ENCODE measurements at regions of chr3 and their contacts with region 1.

Region 1: DNA sequence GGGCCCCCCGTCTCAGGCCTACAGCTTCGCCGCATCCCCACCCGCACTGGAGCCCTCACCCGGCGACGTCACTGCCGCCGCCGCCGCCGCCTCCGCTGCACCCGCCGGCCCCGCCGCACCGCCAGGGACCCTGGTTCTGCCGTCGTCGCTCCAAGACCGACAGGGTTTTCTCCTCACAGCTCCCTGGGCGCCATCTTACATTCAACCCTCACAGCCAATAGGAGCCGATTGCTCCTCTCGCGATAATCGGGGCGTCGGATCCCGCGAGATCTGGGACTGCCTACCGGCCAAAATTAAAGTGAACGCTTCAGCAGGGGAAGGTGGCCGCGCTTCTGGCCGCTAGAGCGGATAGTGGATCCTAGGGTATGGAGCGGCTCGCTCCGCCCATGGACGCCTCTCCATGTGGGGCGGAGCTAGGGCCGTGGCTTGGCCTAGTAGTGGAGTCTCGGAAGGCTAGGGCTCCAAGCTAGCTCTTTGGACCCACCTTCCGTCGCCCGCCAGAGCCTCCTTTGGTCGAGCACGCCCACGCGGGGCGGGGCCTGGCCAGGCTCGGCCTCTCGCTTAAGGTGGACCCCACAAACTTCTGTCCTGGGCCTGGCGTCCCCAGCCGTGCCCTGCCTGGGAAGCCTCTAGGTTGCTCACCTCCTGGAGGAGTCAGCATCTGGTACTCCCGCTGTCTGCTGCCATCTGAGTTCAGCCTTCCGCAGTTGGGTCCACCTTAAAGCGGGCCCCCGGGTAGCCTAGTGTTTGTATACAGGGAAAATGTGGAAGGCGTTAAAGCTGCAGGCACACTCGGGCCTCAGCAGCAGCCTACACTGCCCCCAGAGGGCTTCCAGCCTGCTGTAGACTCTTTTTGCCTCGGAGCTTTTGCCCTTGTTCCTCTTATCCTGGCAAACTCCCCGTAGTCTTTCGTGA is at the start of gene QRICH1:
- DNase-seq: peak; percentile 99
- H3K4me3 Mint-ChIP-seq: peak within 1 kb of the TSS; percentile 96
- H3K27ac Mint-ChIP-seq: peak within 1 kb of the TSS; percentile 97
- H3K4me1 Mint-ChIP-seq: peaks cover 17% of the 10 kb centered on the region
- H3K27me3 Mint-ChIP-seq: no peaks in the 10 kb centered on the region
- total RNA-seq, gene QRICH1: 138 and 152 TPM in 2 replicates

Region 2: DNA sequence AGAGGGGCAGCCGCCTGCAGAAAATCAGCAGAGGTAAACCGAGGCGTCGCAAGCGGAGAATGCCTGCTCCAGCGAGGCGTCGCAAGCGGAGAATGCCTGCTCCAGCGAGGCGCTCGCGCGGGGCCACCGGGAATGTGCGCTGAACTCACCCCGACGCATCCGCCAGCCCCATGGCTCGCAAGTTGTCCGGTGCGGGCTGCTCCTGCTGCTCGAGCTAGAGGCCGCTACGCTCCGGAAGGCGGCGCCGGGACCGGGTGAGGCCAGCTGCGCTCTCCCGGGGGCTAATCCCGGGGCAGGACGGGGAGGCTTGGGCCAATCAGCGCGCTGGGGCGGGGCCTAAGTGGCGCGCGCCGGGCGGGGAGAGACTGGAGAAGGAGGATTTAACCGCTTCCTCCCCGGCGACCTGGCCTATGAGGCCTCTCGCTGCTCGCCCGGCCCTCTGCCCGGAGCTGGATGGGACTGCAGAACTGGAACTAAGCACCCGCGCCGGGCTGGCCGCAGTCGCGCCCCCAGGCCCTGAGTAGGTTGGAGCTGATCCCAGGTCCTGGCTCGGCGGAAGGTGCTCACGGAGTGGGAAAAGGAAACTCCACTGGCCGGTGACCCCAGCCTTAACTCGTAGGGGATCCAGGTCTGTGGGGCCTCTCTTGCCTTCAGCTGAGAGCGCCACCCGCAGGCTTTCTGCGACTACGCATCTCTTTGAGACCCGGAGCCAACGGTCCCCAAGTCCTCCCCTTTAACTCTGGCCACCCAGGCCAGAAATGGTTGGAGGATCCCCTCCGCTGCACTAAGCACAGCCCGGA is 458.7 kb before region 1 on chr3 and contains the start of gene SLC26A6:
- intact Hi-C with region 1: loop called (anchors 1 kb)
- DNase-seq: peak; percentile 99
- H3K4me3 Mint-ChIP-seq: peak within 1 kb of the TSS; percentile 93
- H3K27ac Mint-ChIP-seq: peak within 1 kb of the TSS; percentile 91
- H3K4me1 Mint-ChIP-seq: peaks cover 19% of the 10 kb centered on the region
- H3K27me3 Mint-ChIP-seq: no peaks in the 10 kb centered on the region
- total RNA-seq, gene SLC26A6: 57.2 and 58.2 TPM in 2 replicates

Region 3: DNA sequence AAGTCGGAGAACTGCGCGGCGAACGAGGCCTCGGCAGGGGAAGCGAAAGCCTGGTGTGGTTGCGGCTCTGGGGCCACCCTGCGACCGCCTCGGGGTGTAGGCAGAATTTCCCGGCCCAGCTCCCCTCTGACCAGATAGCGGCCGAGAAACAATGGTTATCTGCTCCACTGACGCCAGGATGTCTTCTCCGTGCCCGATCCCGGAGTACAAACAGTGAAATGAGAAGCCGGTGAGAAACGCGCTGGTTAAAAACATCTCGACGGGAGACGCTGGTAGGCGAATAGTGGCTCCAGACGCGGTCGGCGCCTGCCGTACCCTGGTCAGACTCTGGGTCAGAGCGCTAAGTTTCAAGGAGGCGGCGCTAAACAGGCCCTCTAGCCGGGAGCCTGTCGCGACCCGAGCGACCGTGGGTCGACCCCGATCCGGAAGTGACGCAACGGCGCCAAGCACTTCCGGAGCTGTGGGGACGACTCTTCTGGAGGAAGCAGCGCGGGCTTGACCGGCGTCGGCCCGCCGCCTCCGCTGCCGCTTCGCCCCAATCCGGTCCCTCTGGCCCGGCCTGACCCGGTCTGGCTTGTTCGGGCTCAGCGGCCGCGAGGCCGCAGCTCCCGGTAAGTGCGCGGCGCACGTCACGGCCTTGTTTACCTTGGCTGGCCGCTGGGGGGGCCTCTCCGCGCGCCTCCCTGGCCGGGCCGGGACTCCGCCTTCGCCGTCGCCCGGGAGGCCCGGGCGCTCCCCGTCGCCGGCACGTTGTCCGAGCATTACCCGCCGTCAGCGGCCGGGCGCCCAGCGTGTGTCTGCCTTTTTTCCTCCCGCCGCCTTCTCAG is 175.5 kb before region 1 on chr3 and contains the start of gene ARIH2:
- intact Hi-C with region 1: loop called (anchors 2 kb)
- DNase-seq: peak; percentile 97
- H3K4me3 Mint-ChIP-seq: peak within 1 kb of the TSS; percentile 91
- H3K27ac Mint-ChIP-seq: peak within 1 kb of the TSS; percentile 97
- H3K4me1 Mint-ChIP-seq: peaks cover 22% of the 10 kb centered on the region
- H3K27me3 Mint-ChIP-seq: no peaks in the 10 kb centered on the region
- total RNA-seq, gene ARIH2: 157 TPM in 2 replicates

Region 4: DNA sequence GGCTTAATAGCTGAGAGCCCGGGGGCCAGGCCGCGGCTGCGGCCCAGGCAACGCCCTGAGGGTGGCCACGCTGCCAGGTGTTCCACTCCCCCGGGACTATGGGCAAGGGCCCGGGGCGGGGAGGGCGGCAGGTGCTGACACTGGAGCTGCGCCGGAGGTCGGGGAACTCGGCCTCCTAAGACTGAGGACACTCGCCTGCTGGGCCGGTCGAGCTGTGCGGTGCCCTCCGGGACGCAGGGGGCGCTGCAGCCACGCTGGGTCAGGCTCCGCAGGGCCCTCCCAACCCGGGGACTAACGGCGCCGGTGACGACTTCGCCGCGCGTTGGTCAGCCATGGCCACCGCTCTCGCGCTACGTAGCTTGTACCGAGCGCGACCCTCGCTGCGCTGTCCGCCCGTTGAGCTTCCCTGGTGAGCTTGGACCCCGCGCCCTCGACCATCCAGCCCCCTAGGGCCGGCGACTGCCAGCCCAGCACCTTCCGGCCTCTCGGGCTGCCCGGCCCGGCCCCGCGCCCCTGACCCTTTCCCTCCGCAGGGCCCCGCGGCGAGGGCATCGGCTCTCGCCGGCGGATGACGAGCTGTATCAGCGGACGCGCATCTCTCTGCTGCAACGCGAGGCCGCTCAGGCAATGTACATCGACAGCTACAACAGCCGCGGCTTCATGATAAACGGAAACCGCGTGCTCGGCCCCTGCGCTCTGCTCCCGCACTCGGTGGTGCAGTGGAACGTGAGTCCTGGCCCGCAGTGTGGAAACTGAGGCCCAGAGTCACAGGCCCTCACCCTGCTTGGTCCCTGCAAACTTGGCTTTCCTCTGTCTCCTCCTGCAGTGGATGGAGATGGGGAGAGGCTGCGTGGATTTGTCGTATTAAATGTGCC is 72.1 kb before region 1 on chr3 and contains the start of gene NDUFAF3:
- intact Hi-C with region 1: loop called (anchors 1 kb)
- DNase-seq: peak; percentile 98
- H3K4me3 Mint-ChIP-seq: peak within 1 kb of the TSS; percentile 96
- H3K27ac Mint-ChIP-seq: peak within 1 kb of the TSS; percentile 98
- H3K4me1 Mint-ChIP-seq: peaks cover 35% of the 10 kb centered on the region
- H3K27me3 Mint-ChIP-seq: no peaks in the 10 kb centered on the region
- total RNA-seq, gene NDUFAF3: 123 and 126 TPM in 2 replicates

Region 5: DNA sequence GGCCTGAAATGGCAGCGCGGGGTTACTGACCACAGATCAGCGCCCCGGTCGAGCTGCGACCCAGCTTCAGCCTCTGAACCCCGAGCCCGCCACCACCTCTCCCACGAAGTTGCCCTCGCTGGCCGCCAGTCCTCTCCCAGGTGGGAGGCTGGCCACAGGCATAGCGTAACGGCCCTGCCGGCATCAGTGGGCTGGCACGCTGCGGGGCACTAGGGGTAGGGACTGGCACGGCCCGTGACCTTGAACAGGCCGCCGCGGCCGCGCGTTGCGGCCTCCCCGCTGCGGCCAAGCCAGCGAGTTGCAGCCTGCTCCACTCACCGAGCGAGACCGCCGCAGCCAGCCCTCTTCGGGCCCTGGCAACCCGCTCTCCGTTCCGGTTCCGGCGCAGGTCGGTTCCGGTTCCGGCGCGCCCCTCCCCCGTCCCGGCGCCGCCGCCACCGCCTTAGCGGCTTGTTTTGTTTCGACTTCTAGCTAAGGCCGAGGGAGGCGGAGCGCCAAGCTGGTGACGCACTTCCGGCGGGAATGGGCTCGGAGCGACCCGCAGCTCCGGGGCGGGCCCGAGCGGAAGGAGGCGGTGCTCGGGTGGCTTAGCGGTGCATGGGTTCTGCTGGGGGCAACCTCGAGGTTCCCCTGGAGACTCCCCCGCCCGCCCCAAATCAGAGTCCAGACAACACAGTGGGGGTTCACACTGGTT is 26.5 kb after region 1 on chr3 and contains the start of gene USP19:
- intact Hi-C with region 1: loop called (anchors 1 kb)
- DNase-seq: peak; percentile 99
- H3K4me3 Mint-ChIP-seq: peak within 1 kb of the TSS; percentile 91
- H3K27ac Mint-ChIP-seq: peak within 1 kb of the TSS; percentile 87
- H3K4me1 Mint-ChIP-seq: peaks cover 9% of the 10 kb centered on the region
- H3K27me3 Mint-ChIP-seq: no peaks in the 10 kb centered on the region
- total RNA-seq, gene USP19: 57.2 and 64.9 TPM in 2 replicates

Region 6: DNA sequence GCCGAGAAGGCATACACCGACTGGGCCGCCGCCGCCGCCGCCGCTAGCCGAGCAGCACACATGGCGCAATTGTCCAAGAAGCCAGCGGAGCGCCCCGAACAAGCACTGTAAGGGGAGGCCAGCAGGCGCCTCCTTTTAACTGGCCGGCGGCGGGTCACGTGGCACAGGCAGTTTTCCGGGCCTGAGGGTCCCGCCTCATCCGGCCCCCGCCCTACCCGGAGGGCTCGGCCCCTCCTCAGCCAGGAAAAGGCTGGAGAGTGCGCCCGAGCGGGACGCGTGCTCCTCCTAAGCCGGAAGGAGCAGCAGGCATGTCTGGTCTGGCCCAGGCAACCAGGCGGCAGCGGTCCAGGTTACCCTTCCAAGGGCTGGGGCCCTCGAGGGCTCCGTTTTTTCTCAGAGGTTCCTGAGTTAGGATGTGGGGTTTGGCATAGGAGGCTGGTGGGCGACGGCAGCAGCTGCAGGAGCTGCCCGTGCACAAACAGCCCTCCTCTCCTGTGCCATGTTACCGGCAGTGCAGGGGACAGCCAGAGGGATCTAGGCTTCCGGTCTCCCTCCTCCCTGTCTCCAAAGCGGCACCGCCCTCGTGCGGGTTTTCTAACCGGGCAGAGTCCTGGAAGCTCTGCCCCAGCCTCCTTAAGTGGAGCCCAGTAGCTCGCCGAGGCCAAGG is 264.2 kb after region 1 on chr3 and contains the start of gene GPX1:
- intact Hi-C with region 1: loop called (anchors 5 kb)
- DNase-seq: peak; percentile 96
- H3K4me3 Mint-ChIP-seq: peak within 1 kb of the TSS; percentile 95
- H3K27ac Mint-ChIP-seq: peak within 1 kb of the TSS; percentile 97
- H3K4me1 Mint-ChIP-seq: peaks cover 21% of the 10 kb centered on the region
- H3K27me3 Mint-ChIP-seq: no peaks in the 10 kb centered on the region
- total RNA-seq, gene GPX1: 190 and 200 TPM in 2 replicates

Region 7: DNA sequence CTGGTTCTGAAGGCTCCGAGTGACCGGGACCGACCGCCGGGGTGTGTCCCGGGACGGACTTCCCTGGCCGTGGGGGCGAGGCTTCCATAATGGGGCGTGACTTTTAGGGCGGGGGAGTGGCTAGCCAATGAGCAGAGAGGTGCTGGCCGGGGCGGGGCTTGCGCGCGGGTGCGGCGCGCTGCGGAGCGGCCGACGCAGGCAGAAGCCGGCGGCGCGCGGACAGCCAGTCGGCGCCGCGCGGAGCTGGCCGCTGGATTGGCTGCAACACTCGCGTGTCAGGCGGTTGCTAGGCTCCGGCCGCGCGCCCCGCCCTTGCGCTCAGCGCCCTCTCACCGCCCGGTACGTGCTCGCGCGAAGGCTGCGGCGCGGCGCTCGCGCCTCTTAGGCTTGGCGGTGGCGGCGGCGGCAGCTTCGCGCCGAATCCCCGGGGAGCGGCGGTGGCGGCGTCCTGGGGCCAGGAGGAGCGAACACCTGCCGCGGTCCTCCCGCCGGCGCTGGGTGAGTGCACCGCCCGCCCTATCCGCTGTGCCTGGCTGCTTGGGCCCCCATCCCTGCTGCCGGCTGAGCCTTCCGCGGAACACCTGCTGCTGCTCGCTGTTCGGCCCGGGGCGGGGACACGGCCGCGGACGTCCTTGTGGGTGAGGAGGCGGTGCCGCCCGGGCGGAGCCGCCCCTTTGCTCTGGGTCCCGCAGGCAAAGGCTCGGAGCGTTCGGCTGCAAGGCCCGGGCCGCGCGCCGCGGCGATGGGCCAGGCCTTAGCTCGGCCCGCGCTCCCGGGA is 376.0 kb after region 1 on chr3 and contains the start of gene DAG1:
- intact Hi-C with region 1: loop called (anchors 1 kb)
- DNase-seq: peak; percentile 99
- H3K4me3 Mint-ChIP-seq: peak within 1 kb of the TSS; percentile 93
- H3K27ac Mint-ChIP-seq: peak within 1 kb of the TSS; percentile 91
- H3K4me1 Mint-ChIP-seq: peaks cover 21% of the 10 kb centered on the region
- H3K27me3 Mint-ChIP-seq: no peaks in the 10 kb centered on the region
- total RNA-seq, gene DAG1: 21.3 and 21.9 TPM in 2 replicates

Measured in activated CD4-positive, alpha-beta T cell treated with anti-CD3 and anti-CD28 coated beads, Interleukin-2, amount 10 ng/mL, durations not matched to agents 24 days and 14 days (primary cell).